ENCODE measurements at regions of chr19 and their contacts with region 1.

Region 1: DNA sequence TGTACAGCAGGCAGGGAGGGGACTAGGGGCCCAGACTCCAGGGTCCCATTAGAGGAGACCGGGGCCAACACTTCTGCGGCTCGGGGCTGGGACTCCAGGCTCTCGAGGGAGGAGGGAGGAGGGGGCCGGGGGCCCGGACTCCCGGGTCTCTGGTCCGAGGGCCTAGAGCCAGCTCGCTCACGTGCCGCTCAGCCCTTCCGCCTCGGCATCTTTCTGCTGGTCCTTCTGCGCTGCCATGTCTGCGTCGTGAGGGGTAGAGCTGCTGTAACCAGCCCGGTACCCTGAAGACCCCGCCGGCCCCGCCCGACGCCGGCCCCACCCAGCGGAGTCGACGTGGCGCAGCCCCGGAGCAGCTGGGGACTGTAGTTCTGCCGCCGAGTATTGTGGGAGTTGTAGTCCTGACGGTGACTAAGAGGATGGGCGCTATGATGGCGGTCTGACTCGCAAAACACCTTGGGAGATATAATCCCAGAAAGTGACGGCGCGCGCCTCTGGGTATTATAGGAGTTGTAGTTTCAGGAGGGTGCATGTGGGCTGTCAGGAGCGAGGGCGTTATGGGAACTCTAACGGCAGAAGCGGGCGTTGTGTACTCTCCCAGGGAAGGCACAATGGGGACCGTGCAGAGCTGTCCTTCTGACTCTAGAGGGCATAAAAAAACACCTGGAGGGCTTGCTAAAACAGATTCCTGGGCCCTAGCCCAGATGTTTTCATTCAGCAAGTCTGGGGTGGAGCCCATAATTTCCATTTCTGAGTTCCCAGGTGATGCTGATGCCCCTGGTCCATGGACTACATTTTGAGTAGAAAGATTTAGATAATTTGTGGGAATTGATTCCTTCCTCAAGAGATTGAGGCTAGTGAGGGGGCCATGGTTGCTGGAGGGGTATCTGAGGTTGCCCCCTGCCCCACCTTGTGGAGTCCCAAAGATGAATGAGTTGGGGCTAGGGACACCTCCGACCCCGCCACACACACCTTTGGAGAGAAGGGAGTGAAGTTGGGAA is at the start of gene RABAC1:
- DNase-seq: peak; percentile 92
- H3K4me3 Mint-ChIP-seq: peak within 1 kb of the TSS; percentile 86
- H3K27ac Mint-ChIP-seq: peak within 1 kb of the TSS; percentile 82
- H3K4me1 Mint-ChIP-seq: peaks cover 14% of the 10 kb centered on the region
- H3K27me3 Mint-ChIP-seq: no peaks in the 10 kb centered on the region
- total RNA-seq, gene RABAC1: 64.9 to 68.4 TPM

Region 2: GRCh38 chr19:41795031-41795461 is 164.3 kb before region 1 on chr19:
- CTCF ChIA-PET with region 1: interaction called, 19 read pairs
- POLR2A ChIA-PET with region 1: no interaction called
- intact Hi-C with region 1: no loop called
- DNase-seq: peak; percentile 64
- H3K4me3 Mint-ChIP-seq: no peak overlapping the region
- H3K27ac Mint-ChIP-seq: no peak overlapping the region
- H3K4me1 Mint-ChIP-seq: no peaks in the 10 kb centered on the region
- H3K27me3 Mint-ChIP-seq: peaks cover 28% of the 10 kb centered on the region

Region 3: GRCh38 chr19:41859618-41860418 is 99.5 kb before region 1 on chr19 and contains the start of gene RPS19:
- CTCF ChIA-PET with region 1: interaction called, 29 read pairs
- POLR2A ChIA-PET with region 1: interaction called, 17 read pairs
- intact Hi-C with region 1: loop called (anchors 1 kb)
- DNase-seq: peak; percentile 99
- H3K4me3 Mint-ChIP-seq: peak within 1 kb of the TSS; percentile 87
- H3K27ac Mint-ChIP-seq: peak within 1 kb of the TSS; percentile 94
- H3K4me1 Mint-ChIP-seq: peaks cover 43% of the 10 kb centered on the region
- H3K27me3 Mint-ChIP-seq: no peaks in the 10 kb centered on the region
- total RNA-seq, gene RPS19: 3,181 to 3,314 TPM

Region 4: DNA sequence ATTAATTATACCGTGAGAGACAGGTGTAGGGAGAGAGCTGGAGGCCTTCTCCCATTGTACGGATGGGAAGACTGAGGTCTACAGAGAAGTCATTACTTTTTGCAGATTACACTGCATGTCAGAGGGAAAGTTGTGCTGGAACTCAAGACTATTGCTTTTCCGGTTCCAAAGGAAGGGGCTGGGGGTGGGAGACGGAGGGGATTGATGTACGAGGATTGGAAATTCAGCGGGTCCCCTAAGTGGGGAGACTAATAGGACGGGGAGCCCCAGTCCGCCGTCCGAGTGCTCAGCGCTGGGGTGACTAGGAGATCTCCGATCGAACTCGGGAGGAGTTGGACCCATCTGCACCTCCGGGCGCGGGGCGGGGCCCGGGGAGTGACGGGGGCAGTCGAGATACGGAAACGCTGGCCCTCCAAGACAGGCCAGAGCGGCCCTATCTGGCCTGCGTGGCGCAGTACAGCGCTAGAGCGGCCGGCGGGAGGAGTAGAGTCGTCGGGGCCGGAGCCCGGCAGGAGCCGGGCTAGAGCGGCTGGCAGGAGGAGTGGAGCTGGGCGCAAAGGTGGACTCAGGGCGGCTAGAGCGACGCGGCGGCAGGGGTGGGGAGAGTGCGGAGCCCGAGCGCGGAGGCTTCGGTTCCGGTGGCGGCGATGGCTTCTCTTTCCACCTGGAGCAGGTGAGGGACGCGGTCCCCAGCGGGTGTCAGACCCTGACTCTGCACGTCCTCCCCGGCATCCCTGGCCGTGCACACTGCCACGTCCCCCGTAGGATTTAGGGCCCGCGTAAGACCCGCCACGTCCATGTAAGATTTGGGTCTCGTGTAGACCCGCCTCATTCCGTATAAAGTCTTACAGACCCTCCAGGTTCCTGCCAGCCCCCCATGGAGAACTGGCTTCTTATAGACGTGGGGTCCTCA is 75.3 kb before region 1 on chr19:
- CTCF ChIA-PET with region 1: interaction called, 12 read pairs
- POLR2A ChIA-PET with region 1: no interaction called
- intact Hi-C with region 1: no loop called
- DNase-seq: peak; percentile 95
- H3K4me3 Mint-ChIP-seq: peak overlapping the region; percentile 95
- H3K27ac Mint-ChIP-seq: peak overlapping the region; percentile 97
- H3K4me1 Mint-ChIP-seq: peaks cover 59% of the 10 kb centered on the region
- H3K27me3 Mint-ChIP-seq: no peaks in the 10 kb centered on the region

Region 5: DNA sequence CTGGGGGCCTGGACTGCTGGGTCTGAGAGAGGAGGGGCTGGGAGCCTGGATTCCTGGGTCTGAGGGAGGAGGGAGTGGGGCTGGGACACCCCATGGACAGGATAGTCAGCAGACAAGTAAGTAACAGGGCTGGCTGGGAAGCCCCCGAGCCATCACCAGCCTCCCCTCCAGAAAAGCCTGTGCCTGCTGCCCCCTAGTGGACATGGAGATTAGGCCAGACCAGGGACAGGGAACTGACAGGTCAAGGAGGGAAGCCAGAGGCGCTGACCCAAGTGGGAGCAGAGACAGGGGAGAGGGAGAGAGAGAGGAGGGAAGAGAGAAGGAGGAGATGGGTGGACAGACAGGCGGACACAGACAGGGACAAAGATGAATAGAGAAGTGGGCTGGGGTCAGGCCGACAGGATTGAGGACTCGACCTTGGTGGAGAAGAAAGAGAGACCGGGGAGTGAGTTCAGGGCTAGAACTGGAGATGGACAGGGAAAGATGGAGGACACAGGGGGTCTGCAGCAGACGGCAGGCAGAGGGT is 24.4 kb before region 1 on chr19:
- CTCF ChIA-PET with region 1: interaction called, 4 read pairs
- POLR2A ChIA-PET with region 1: no interaction called
- intact Hi-C with region 1: loop called (anchors 2 kb)
- DNase-seq: peak; percentile 88
- H3K4me3 Mint-ChIP-seq: peak overlapping the region; percentile 4
- H3K27ac Mint-ChIP-seq: peak overlapping the region; percentile 55
- H3K4me1 Mint-ChIP-seq: peaks cover 35% of the 10 kb centered on the region
- H3K27me3 Mint-ChIP-seq: peaks cover 1% of the 10 kb centered on the region

Region 6: DNA sequence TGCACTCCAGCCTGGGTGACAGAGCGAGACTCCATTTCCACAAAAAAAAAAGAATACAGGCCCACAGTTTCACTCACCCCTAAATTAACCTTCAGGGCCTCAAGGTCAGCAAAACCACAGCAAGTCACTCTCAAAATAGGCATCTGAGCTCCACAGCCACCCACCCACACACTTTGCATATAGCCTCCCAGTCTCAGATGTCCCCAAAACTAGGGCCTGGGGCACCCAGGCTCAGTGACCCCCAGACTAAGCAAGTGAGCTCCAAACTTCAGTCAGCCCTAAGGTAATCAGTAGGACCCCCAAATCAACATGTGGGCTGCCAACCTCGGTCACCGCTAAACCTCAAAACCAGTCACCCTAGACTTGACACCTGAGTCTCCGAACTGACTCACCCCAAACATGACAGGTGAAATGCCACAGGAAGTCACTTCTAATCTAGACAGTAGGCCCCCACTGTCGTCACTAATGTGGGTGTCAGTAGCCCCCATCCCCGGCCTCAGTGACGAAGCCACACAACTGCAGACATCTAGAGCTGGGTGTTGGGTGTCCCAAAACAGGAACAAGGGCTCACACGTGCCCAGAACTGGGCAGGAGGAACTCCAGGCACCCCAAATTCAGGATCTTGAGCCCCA is 14.1 kb before region 1 on chr19:
- CTCF ChIA-PET with region 1: interaction called, 25 read pairs
- POLR2A ChIA-PET with region 1: interaction called, 4 read pairs
- intact Hi-C with region 1: no loop called
- DNase-seq: peak; percentile 95
- H3K4me3 Mint-ChIP-seq: peak overlapping the region; percentile 53
- H3K27ac Mint-ChIP-seq: peak overlapping the region; percentile 98
- H3K4me1 Mint-ChIP-seq: peaks cover 42% of the 10 kb centered on the region
- H3K27me3 Mint-ChIP-seq: peaks cover 2% of the 10 kb centered on the region

Region 7: DNA sequence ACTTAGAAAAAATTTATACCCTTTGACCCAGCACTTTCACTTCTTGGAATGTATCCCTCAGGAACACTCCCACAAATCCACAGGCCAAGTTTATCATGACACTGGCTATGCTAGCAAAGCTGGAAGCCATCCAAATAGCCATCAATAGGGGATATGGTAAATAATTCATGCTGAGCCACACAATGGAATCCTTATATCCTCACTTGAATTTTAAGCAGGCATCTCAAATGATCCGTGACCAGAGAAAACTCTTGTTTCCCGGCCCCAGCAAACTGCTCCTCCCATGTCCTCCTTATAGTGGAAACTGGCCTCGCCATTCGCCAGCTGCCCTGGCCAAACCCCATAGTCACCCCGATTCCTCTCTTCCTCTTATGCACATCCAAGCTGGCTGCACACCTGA is 73.1 kb after region 1 on chr19:
- CTCF ChIA-PET with region 1: interaction called, 8 read pairs
- POLR2A ChIA-PET with region 1: no interaction called
- intact Hi-C with region 1: loop called (anchors 2 kb)
- DNase-seq: no peak
- H3K4me3 Mint-ChIP-seq: no peak overlapping the region
- H3K27ac Mint-ChIP-seq: no peak overlapping the region
- H3K4me1 Mint-ChIP-seq: peaks cover 2% of the 10 kb centered on the region
- H3K27me3 Mint-ChIP-seq: peaks cover 7% of the 10 kb centered on the region

Region 8: GRCh38 chr19:42450314-42450934 is 491.1 kb after region 1 on chr19:
- CTCF ChIA-PET with region 1: no interaction called
- POLR2A ChIA-PET with region 1: no interaction called
- intact Hi-C with region 1: no loop called
- DNase-seq: peak; percentile 86
- H3K4me3 Mint-ChIP-seq: no peak overlapping the region
- H3K27ac Mint-ChIP-seq: no peak overlapping the region
- H3K4me1 Mint-ChIP-seq: no peaks in the 10 kb centered on the region
- H3K27me3 Mint-ChIP-seq: peaks cover 2% of the 10 kb centered on the region